ENCODE measurements at regions of chr17 and their contacts with region 1.

Region 1: GRCh38 chr17:35969558-35970380 is 11.5 kb downstream of the CCL16 start:
- DNase-seq: peak; percentile 84
- ATAC-seq: peak; percentile 60
- H3K4me3 ChIP-seq: no peak overlapping the region
- H3K4me3 Mint-ChIP-seq: no peak overlapping the region
- H3K27ac ChIP-seq: no peak overlapping the region
- H3K27ac Mint-ChIP-seq: no peak overlapping the region
- H3K4me1 ChIP-seq: no peaks in the 10 kb centered on the region
- H3K4me1 Mint-ChIP-seq: peaks cover 1% of the 10 kb centered on the region
- H3K27me3 ChIP-seq: no peaks in the 10 kb centered on the region
- H3K27me3 Mint-ChIP-seq: peaks cover 21% of the 10 kb centered on the region
- CTCF ChIP-seq: peak; percentile 92

Region 2: GRCh38 chr17:34886831-34887230 is 1082.9 kb before region 1 on chr17:
- CTCF ChIA-PET with region 1: no interaction called
- POLR2A ChIA-PET with region 1: no interaction called
- intact Hi-C with region 1: no loop called
- DNase-seq: no peak
- ATAC-seq: no peak
- H3K4me3 ChIP-seq: no peak overlapping the region
- H3K4me3 Mint-ChIP-seq: no peak overlapping the region
- H3K27ac ChIP-seq: no peak overlapping the region
- H3K27ac Mint-ChIP-seq: no peak overlapping the region
- H3K4me1 ChIP-seq: peaks cover 3 to 6% of the 10 kb centered on the region in 2 donors
- H3K4me1 Mint-ChIP-seq: peaks cover 6% of the 10 kb centered on the region
- H3K27me3 ChIP-seq: peaks cover 0 to 21% (median 0%) of the 10 kb centered on the region in 4 experiments
- H3K27me3 Mint-ChIP-seq: peaks cover 40% of the 10 kb centered on the region
- CTCF ChIP-seq: no peak

Region 3: DNA sequence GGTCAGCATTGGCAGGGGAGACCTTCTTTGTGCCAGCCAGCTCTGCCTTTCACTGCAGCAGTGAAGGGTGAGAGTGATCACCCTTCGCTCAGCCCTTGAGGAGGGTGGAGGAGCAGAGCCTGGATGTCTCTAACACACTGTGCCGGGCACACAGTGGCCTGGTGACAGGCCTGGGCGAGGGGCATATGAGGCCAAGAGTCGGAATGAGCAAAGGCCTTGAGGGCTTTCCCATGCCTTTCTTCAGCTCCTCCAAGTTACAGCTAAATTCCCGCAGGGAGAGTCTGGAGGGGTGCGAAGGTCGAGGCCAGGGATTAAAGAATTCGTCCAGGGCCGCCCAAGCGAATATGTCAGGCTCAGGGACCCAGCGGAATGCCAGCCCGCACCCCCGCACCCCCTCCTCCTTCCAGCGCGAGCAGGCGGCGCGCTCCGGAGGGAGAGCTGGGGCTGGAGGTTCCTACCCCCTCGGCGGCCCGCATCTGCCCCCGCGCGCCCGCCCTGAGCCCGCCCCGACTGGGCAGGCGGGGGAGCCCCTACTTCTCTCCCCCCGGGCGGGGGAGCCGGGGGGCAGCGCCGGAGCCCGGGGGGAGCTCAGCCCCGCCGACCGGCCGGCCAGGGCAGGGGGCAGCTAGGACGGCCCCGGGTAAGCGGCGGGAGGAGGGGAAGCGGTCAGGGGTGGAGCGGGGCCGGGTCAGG is 238.4 kb before region 1 on chr17 and contains the start of gene RASL10B:
- CTCF ChIA-PET with region 1: no interaction called
- POLR2A ChIA-PET with region 1: no interaction called
- intact Hi-C with region 1: no loop called
- DNase-seq: peak; percentile 46
- ATAC-seq: peak; percentile 70
- H3K4me3 ChIP-seq: peak within 1 kb of the TSS in 3 of 5 experiments; percentile 10 to 40 (median 31)
- H3K4me3 Mint-ChIP-seq: peak within 1 kb of the TSS; percentile 81
- H3K27ac ChIP-seq: no peak within 1 kb of the TSS
- H3K27ac Mint-ChIP-seq: no peak within 1 kb of the TSS
- H3K4me1 ChIP-seq: peaks cover 9 to 11% of the 10 kb centered on the region in 2 donors
- H3K4me1 Mint-ChIP-seq: peaks cover 15% of the 10 kb centered on the region
- H3K27me3 ChIP-seq: peaks cover 0 to 12% (median 0%) of the 10 kb centered on the region in 4 experiments
- H3K27me3 Mint-ChIP-seq: peaks cover 11% of the 10 kb centered on the region
- CTCF ChIP-seq: no peak
- total RNA-seq, gene RASL10B: 1.2 TPM in 1 of 2 replicates, not detected in the other

Region 4: GRCh38 chr17:35841505-35841904 is 128.3 kb before region 1 on chr17:
- CTCF ChIA-PET with region 1: no interaction called
- POLR2A ChIA-PET with region 1: no interaction called
- intact Hi-C with region 1: no loop called
- DNase-seq: no peak
- ATAC-seq: no peak
- H3K4me3 ChIP-seq: no peak overlapping the region
- H3K4me3 Mint-ChIP-seq: no peak overlapping the region
- H3K27ac ChIP-seq: no peak overlapping the region
- H3K27ac Mint-ChIP-seq: no peak overlapping the region
- H3K4me1 ChIP-seq: no peaks in the 10 kb centered on the region
- H3K4me1 Mint-ChIP-seq: no peaks in the 10 kb centered on the region
- H3K27me3 ChIP-seq: no peaks in the 10 kb centered on the region
- H3K27me3 Mint-ChIP-seq: no peaks in the 10 kb centered on the region
- CTCF ChIP-seq: no peak

Region 5: GRCh38 chr17:35953720-35954119 is 16.0 kb before region 1 on chr17:
- CTCF ChIA-PET with region 1: interaction called, 13 read pairs
- POLR2A ChIA-PET with region 1: no interaction called
- intact Hi-C with region 1: no loop called
- DNase-seq: no peak
- ATAC-seq: no peak
- H3K4me3 ChIP-seq: no peak overlapping the region
- H3K4me3 Mint-ChIP-seq: no peak overlapping the region
- H3K27ac ChIP-seq: no peak overlapping the region
- H3K27ac Mint-ChIP-seq: no peak overlapping the region
- H3K4me1 ChIP-seq: no peaks in the 10 kb centered on the region
- H3K4me1 Mint-ChIP-seq: no peaks in the 10 kb centered on the region
- H3K27me3 ChIP-seq: peaks cover 0 to 2% (median 0%) of the 10 kb centered on the region in 4 experiments
- H3K27me3 Mint-ChIP-seq: peaks cover 34% of the 10 kb centered on the region
- CTCF ChIP-seq: no peak

Region 6: GRCh38 chr17:35981908-35982330 is 12.2 kb after region 1 on chr17:
- CTCF ChIA-PET with region 1: interaction called, 26 read pairs
- POLR2A ChIA-PET with region 1: no interaction called
- intact Hi-C with region 1: no loop called
- DNase-seq: peak; percentile 27
- ATAC-seq: peak; percentile 33
- H3K4me3 ChIP-seq: no peak overlapping the region
- H3K4me3 Mint-ChIP-seq: no peak overlapping the region
- H3K27ac ChIP-seq: no peak overlapping the region
- H3K27ac Mint-ChIP-seq: no peak overlapping the region
- H3K4me1 ChIP-seq: peaks cover 0 to 3% of the 10 kb centered on the region in 2 donors
- H3K4me1 Mint-ChIP-seq: peaks cover 8% of the 10 kb centered on the region
- H3K27me3 ChIP-seq: peaks cover 0 to 3% (median 1%) of the 10 kb centered on the region in 4 experiments
- H3K27me3 Mint-ChIP-seq: peaks cover 13% of the 10 kb centered on the region
- CTCF ChIP-seq: no peak

Region 7: GRCh38 chr17:36072431-36073121 is 102.8 kb after region 1 on chr17:
- CTCF ChIA-PET with region 1: interaction called, 19 read pairs
- POLR2A ChIA-PET with region 1: no interaction called
- intact Hi-C with region 1: no loop called
- DNase-seq: peak; percentile 64
- ATAC-seq: peak; percentile 47
- H3K4me3 ChIP-seq: no peak overlapping the region
- H3K4me3 Mint-ChIP-seq: no peak overlapping the region
- H3K27ac ChIP-seq: no peak overlapping the region
- H3K27ac Mint-ChIP-seq: no peak overlapping the region
- H3K4me1 ChIP-seq: peaks cover 4 to 8% of the 10 kb centered on the region in 2 donors
- H3K4me1 Mint-ChIP-seq: peaks cover 14% of the 10 kb centered on the region
- H3K27me3 ChIP-seq: no peaks in the 10 kb centered on the region
- H3K27me3 Mint-ChIP-seq: no peaks in the 10 kb centered on the region
- CTCF ChIP-seq: peak; percentile 71

Region 8: DNA sequence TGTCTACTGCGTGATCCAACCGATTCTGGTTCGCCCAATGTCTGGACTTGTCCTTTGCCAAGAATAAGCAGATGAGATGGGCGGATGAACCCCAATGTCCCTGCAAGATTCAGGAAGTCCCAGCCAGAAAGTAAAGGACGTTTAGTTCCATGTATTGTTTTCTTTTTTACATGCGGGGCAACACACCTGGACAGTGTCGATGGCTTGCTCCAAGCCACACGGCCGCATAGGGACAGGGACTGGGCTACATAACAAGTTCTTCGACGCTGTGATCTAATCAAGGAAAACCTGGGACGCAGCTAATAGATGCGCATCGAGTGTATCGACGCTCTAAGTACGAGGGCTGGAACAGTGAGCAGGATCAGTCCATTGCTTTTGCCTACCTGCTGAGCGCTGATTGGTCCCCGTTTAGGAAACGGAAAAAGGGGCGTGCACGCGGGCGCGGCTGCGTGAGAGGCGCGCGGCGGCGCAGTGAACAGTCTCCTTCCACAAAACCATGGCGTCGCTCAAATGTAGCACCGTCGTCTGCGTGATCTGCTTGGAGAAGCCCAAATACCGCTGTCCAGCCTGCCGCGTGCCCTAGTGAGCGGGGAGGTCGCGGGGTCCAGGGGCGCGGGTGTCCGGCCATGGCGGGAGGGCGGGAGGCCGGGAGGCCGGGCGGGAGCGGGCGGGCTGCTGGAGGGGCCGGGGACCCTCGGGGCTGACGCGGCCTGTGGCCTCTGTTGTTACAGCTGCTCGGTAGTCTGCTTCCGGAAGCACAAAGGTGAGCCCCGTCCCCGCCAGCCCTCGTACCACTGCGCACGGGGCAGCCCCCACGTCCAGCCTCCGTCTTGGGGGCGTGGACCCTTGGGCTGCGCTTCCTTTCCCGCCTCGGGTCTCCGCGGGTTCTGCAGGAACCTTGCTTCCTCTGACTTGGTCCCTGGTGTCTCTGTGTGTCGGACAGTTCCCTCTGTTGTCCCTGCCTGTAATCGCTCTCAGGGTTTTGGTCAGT is 516.7 kb after region 1 on chr17 and contains the start of gene ZNHIT3:
- CTCF ChIA-PET with region 1: interaction called, 72 read pairs
- POLR2A ChIA-PET with region 1: interaction called, 3 read pairs
- intact Hi-C with region 1: loop called (anchors 1 kb)
- DNase-seq: peak; percentile 93
- ATAC-seq: peak; percentile 89
- H3K4me3 ChIP-seq: peak within 1 kb of the TSS; percentile 59 to 95 (median 86)
- H3K4me3 Mint-ChIP-seq: peak within 1 kb of the TSS; percentile 99
- H3K27ac ChIP-seq: peak within 1 kb of the TSS; percentile 56 to 83
- H3K27ac Mint-ChIP-seq: peak within 1 kb of the TSS; percentile 99
- H3K4me1 ChIP-seq: peaks cover 31 to 38% of the 10 kb centered on the region in 2 donors
- H3K4me1 Mint-ChIP-seq: peaks cover 44% of the 10 kb centered on the region
- H3K27me3 ChIP-seq: peaks cover 0 to 16% (median 13%) of the 10 kb centered on the region in 4 experiments
- H3K27me3 Mint-ChIP-seq: peaks cover 10% of the 10 kb centered on the region
- CTCF ChIP-seq: no peak
- total RNA-seq, gene ZNHIT3: 50.5 and 53.3 TPM in 2 replicates

Measured in B cell (primary cell).